ENCODE measurements at regions of chr17 and their contacts with region 1.

Region 1: GRCh38 chr17:49180303-49180702 is 30.1 kb downstream of the GNGT2 start:
- DNase-seq: peak; percentile 69
- ATAC-seq: peak; percentile 71
- H3K4me3 Mint-ChIP-seq: no peak overlapping the region
- H3K27ac Mint-ChIP-seq: no peak overlapping the region
- H3K4me1 Mint-ChIP-seq: peaks cover 11% of the 10 kb centered on the region
- H3K27me3 Mint-ChIP-seq: peaks cover 4% of the 10 kb centered on the region

Region 2: DNA sequence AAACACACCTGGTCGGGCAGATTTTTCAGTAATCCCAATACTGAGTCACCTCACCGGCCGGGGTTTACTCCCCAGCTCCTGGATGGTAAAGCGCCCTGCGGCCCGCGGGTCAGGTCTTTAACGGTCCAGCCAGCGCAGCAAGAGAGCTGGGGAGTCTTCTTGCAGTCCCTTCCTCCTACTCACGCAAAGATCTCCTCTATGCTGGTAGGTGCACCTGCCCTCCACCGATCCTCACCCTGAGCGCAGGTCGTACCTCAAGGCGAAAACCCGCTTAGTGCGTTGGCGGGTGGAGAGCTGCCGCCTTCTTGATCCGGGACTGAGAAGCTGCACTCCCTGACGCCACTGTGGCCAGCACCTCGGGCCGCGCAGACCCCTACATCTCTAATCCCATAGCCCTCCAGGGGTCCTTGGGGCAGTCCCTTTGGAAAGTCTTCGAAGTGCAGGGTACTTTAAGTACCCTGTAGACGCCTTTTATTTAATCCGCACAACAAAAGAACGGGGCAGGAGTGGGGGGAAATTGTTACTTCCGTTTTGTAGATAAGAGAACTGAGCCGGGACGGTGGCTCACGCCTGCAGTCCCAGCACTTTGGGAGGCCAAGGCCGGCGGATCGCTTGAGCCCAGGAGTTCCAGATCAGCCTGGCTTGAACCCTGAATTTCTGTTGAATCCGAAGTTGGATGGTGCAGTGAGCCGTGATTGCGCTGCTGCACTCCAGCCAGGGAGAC is 441.3 kb before region 1 on chr17:
- CTCF ChIA-PET with region 1: no interaction called
- DNase-seq: no peak
- ATAC-seq: no peak
- H3K4me3 Mint-ChIP-seq: peak overlapping the region; percentile 7
- H3K27ac Mint-ChIP-seq: no peak overlapping the region
- H3K4me1 Mint-ChIP-seq: peaks cover 6% of the 10 kb centered on the region
- H3K27me3 Mint-ChIP-seq: peaks cover 99% of the 10 kb centered on the region

Region 3: GRCh38 chr17:49170216-49170615 is 10.1 kb before region 1 on chr17:
- CTCF ChIA-PET with region 1: interaction called, 10 read pairs
- DNase-seq: no peak
- ATAC-seq: no peak
- H3K4me3 Mint-ChIP-seq: no peak overlapping the region
- H3K27ac Mint-ChIP-seq: no peak overlapping the region
- H3K4me1 Mint-ChIP-seq: no peaks in the 10 kb centered on the region
- H3K27me3 Mint-ChIP-seq: peaks cover 77% of the 10 kb centered on the region

Region 4: DNA sequence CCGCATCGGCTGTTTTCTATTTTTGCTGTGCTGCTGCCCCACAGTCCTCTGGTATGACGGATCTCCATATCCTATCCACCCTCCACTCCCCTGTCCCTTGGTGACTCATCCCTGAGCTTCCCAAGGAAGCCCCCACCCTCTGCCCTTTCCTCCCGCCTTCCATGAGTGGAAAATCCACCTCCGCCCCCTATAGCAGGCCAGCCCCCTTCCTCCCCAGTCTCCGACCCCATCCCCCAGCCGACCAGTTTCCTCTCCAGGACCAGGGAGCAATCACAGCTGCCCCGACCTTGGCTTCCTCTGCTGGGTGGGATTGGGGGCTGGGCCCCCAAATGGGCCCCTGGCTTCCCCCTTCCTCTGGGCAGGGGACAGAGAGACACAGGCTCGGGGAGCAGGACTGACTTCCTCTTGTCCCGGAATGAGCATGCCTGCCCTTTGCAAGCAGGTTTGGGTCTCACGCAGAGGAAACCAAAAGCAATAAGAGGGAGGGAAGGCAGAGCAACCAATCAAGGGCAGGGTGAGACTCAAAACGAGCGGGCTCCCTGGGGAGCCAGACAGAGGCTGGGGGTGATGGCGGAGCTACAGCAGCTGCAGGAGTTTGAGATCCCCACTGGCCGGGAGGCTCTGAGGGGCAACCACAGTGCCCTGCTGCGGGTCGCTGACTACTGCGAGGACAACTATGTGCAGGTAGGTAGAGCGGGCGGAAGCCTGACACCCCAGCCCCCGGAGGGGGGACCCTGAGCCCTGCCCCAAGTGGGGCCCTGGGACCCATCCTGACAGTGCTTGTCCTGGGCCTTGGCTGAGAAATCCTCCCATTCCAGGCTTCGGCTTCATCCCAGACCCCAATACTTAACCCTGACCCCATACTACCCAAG is 30.1 kb after region 1 on chr17 and contains the starts of genes ABI3 and GNGT2:
- CTCF ChIA-PET with region 1: interaction called, 16 read pairs
- DNase-seq: peak; percentile 87
- ATAC-seq: peak; percentile 87
- H3K4me3 Mint-ChIP-seq: peak within 1 kb of the TSS; percentile 98
- H3K27ac Mint-ChIP-seq: peak within 1 kb of the TSS; percentile 85
- H3K4me1 Mint-ChIP-seq: peaks cover 54% of the 10 kb centered on the region
- H3K27me3 Mint-ChIP-seq: no peaks in the 10 kb centered on the region
- total RNA-seq, gene ABI3: 116 to 121 TPM
- total RNA-seq, gene GNGT2: 39.8 to 45.3 TPM

Region 5: GRCh38 chr17:49223517-49224197 is 43.4 kb after region 1 on chr17:
- CTCF ChIA-PET with region 1: interaction called, 176 read pairs
- DNase-seq: peak; percentile 82
- ATAC-seq: peak; percentile 17
- H3K4me3 Mint-ChIP-seq: peak overlapping the region; percentile 54
- H3K27ac Mint-ChIP-seq: peak overlapping the region; percentile 28
- H3K4me1 Mint-ChIP-seq: peaks cover 63% of the 10 kb centered on the region
- H3K27me3 Mint-ChIP-seq: no peaks in the 10 kb centered on the region

Region 6: GRCh38 chr17:49290690-49291359 is 110.5 kb after region 1 on chr17:
- CTCF ChIA-PET with region 1: interaction called, 11 read pairs
- DNase-seq: peak; percentile 38
- ATAC-seq: no peak
- H3K4me3 Mint-ChIP-seq: no peak overlapping the region
- H3K27ac Mint-ChIP-seq: no peak overlapping the region
- H3K4me1 Mint-ChIP-seq: peaks cover 15% of the 10 kb centered on the region
- H3K27me3 Mint-ChIP-seq: no peaks in the 10 kb centered on the region

Measured in activated CD8-positive, alpha-beta memory T cell treated with anti-CD3 and anti-CD28 coated beads, Interleukin-2, amount 10 ng/mL, durations not matched to agents 7 days and 5 days (primary cell).